K562 (cell line): ENCODE measurements at regions of chr12 and their contacts with region 1.

Region 1: DNA sequence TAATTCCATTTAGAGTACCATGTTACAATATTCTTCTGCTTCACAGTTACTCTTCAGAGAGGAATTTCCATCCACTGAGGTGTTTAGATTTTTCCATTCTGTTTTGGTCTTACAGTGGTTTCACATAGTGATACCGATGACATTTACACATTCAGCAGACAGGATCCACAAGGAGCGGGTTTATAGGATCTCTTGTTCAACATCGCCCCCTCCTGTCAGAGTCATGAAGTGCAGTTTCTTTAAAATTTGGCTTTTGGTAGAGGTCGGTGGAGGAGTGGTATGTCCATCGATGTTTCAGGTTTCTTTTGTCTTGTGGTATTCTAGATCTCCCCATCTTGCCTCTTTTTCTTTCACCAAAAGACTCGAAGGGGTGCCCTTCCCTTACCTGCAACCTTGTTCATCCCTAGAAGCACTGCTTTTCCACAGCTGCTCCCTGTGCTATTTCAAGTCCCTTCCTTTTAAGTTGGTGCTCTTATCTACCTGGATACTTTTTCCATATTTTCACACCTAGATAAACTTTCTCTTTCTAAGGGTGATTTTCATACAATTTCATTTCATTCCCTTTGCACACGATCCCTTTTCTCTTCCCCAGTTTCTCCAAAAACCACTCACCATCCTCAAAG is 181.3 kb downstream of the ITPR2 start:
- DNase-seq: peak; percentile 70 to 72 (median 70)
- ATAC-seq: peak; percentile 88
- H3K4me3 ChIP-seq: no peak overlapping the region
- H3K27ac ChIP-seq: no peak overlapping the region
- H3K4me1 ChIP-seq: no peaks in the 10 kb centered on the region
- H3K27me3 ChIP-seq: no peaks in the 10 kb centered on the region
- CTCF ChIP-seq: peak; percentile 78 to 83 (median 80)
- EP300 ChIP-seq: no peak
- POLR2A ChIP-seq: no peak
- RAD21 ChIP-seq: peak; percentile 87 to 96

Region 2: GRCh38 chr12:26434299-26435068 is 217.2 kb before region 1 on chr12:
- CTCF ChIA-PET with region 1: interaction called, 4 read pairs
- POLR2A ChIA-PET with region 1: no interaction called
- in situ Hi-C with region 1: no loop called
- intact Hi-C with region 1: loop called (anchors 5 kb)
- DNase-seq: peak; percentile 28 to 55 (median 48)
- ATAC-seq: peak; percentile 93
- H3K4me3 ChIP-seq: no peak overlapping the region
- H3K27ac ChIP-seq: no peak overlapping the region
- H3K4me1 ChIP-seq: no peaks in the 10 kb centered on the region
- H3K27me3 ChIP-seq: no peaks in the 10 kb centered on the region
- CTCF ChIP-seq: peak; percentile 71 to 98 (median 86)
- EP300 ChIP-seq: no peak
- POLR2A ChIP-seq: no peak
- RAD21 ChIP-seq: peak; percentile 83 to 91